ENCODE measurements at regions of chr12 and their contacts with region 1.

Region 1: DNA sequence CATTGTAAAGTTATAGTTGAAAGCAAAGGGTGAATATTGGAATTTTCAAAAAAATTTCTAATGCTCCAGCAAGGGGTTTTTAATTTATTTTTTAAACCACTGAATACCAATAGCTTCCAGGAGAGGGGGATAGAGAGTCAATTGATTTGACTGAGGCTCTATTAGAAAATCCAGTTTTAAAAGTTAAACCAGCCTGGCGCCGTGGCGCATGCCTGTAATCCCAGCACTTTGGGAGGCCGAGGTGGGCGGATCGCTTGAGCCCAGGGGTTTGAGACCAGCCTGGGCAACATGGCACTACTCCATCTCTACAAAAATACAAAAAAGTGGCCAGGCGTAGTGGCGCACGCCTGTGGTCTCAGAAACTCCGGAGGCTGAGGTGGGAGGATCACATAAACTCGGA is 150.1 kb downstream of the SLC38A4 start:
- DNase-seq: no peak
- H3K4me3 ChIP-seq: peak overlapping the region in 1 of 4 donors; percentile 1
- H3K27ac ChIP-seq: no peak overlapping the region
- H3K4me1 ChIP-seq: peaks cover 0 to 9% (median 0%) of the 10 kb centered on the region in 4 donors
- H3K27me3 ChIP-seq: no peaks in the 10 kb centered on the region
- CTCF ChIP-seq: peak; percentile 49 to 70 (median 68)
- EP300 ChIP-seq: no peak
- POLR2A ChIP-seq: no peak

Region 2: DNA sequence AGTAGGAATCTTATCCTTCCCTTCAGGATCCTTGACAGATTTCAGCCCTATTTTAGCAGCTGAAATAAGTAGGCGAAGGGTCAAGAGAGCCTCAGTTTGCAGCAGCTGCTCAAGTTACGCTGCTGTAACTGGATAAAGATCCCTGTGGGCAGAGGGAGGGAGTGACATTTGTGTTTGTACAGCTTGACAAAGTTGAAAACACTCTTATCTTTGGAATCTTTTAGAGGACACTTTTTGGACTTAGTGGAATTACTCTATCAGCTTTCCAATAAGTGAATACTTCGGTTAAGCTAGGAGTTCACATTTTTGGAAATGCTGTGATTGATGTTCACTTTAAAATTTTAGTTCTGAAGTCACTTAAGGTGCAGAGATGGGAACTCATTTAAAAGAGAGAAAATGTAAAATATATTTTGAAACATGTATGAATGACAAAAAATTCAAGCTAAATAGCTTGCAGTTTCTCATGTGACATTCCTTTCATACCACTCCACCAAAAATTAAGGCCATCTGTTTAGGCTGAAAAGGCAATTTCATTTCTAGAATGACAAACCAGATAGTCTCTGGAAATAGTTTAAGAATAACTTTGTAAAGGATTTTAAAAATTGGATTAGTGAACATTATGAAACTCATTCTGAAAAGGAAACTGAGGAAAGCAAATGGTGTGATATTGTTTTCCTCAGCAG is 94.9 kb after region 1 on chr12:
- intact Hi-C with region 1: no loop called
- DNase-seq: no peak
- H3K4me3 ChIP-seq: no peak overlapping the region
- H3K27ac ChIP-seq: no peak overlapping the region
- H3K4me1 ChIP-seq: peaks cover 0 to 35% (median 21%) of the 10 kb centered on the region in 4 donors
- H3K27me3 ChIP-seq: no peaks in the 10 kb centered on the region
- CTCF ChIP-seq: no peak
- EP300 ChIP-seq: no peak
- POLR2A ChIP-seq: no peak

Region 3: DNA sequence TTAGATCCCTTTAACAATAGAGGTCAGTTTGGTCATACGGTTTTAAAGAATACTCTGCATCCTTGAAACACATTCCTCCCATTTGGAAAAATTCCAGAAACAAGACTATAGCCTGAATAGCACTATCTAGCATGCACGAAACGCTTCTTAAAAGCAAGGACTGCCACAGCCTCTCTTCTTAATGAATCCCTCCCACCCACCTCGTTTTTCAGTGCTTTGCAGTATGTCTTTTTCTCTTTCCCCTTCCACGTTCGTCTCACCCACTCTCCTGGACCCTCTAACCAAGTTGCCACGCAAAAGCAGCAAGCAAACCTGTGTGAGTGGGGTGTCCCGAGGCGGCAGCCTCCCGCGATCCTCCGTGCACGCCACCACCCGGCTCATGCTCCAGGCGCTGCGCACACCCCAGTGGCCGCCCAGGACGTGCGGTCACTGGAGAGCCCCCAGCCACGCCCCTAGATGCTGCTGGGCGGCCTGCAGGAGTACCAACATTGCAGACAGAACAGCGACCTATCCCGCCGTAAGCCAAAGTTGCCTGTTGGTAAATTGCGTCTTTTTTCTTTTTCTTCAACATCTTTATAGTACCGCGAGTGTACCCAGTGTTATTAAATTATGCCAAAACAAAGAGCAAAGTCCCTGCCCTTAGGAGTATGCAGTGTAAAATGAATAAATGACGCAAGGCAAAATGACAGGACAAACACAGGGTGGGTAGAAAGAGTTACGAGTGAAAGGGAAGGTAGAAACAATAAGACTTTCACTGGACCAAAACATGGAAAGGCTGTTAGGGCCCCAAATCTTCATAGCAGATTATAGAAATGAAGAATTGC is 150.1 kb after region 1 on chr12 and contains the start of gene SLC38A4:
- intact Hi-C with region 1: loop called (anchors 10 kb)
- DNase-seq: no peak
- H3K4me3 ChIP-seq: peak within 1 kb of the TSS in 3 of 4 donors; percentile 26 to 31 (median 30)
- H3K27ac ChIP-seq: no peak within 1 kb of the TSS
- H3K4me1 ChIP-seq: peaks cover 0 to 13% (median 7%) of the 10 kb centered on the region in 4 donors
- H3K27me3 ChIP-seq: peaks cover 0 to 37% (median 0%) of the 10 kb centered on the region in 3 donors
- CTCF ChIP-seq: peak in 2 of 4 experiments; percentile 13 to 19
- EP300 ChIP-seq: no peak
- POLR2A ChIP-seq: no peak
- total RNA-seq, gene SLC38A4: 0.55 to 1.3 (median 0.87) TPM

Region 4: DNA sequence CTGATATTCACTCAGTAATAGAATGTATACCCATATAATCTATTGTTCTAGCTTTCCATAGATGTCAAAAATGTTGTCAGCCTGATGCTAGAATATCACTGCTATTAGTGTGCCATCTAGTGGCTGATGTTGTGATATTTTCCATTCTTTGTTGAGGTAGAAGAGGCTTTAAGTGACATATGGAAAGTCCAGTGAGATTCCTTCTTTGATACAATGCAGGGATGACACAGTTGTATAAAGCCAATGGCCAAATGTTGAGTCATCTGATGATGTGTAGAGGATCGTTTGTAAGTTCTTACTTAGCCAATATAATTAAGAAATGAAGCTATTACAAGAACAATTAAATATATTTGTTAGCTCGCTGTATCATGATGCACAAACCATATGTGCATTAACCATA is 345.6 kb after region 1 on chr12:
- intact Hi-C with region 1: loop called (anchors 5 kb)
- DNase-seq: no peak
- H3K4me3 ChIP-seq: no peak overlapping the region
- H3K27ac ChIP-seq: no peak overlapping the region
- H3K4me1 ChIP-seq: peaks cover 0 to 7% (median 0%) of the 10 kb centered on the region in 4 donors
- H3K27me3 ChIP-seq: no peaks in the 10 kb centered on the region
- CTCF ChIP-seq: peak; percentile 51 to 72 (median 66)
- EP300 ChIP-seq: no peak
- POLR2A ChIP-seq: no peak

Measured in sigmoid colon (tissue), 7 donors.